AG04450 (cell line): ENCODE measurements at regions of chr10 and their contacts with region 1.

Region 1: DNA sequence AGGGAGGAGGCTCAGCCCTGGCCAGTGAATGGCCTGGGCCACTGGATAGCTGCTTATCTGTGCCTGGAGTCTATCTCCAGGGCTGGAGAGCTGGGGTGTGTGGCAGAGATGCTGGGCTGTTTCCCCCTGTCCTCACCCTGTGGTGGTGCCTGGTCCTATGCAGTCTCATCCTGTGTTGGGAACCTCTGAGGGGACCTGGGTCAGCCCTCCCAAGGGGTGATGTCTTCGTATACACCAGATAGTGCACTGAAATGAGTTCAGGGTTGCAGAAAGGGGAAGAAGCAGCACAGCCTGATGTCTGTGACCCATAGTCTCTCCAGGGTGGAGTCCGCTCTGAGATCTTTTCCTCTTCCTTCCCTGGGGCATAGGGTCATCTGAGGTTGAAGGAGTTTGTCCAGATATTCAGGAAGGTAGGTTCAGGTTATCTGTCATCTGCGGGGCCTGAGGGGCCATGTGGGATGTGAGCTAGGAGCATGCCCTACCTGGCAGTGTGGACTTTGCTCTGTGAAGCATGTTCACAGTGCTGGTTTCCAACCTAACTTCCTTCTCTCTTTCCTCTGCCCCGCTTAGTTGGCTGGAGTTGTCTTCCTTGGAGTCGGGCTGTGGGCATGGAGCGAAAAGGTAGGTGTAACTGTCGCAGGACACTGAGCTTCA is 33.4 kb upstream of the SH2D4B start:
- DNase-seq: no peak
- H3K4me3 ChIP-seq: no peak overlapping the region
- H3K27ac ChIP-seq: peak overlapping the region; percentile 42
- H3K27me3 ChIP-seq: no peaks in the 10 kb centered on the region
- CTCF ChIP-seq: no peak

Region 2: GRCh38 chr10:80382989-80383388 is 121.3 kb before region 1 on chr10:
- CTCF ChIA-PET with region 1: interaction called, 15 read pairs
- POLR2A ChIA-PET with region 1: no interaction called
- DNase-seq: no peak
- H3K4me3 ChIP-seq: no peak overlapping the region
- H3K27ac ChIP-seq: no peak overlapping the region
- H3K27me3 ChIP-seq: peaks cover 3% of the 10 kb centered on the region
- CTCF ChIP-seq: peak; percentile 60

Region 3: GRCh38 chr10:80453701-80454513 is 50.4 kb before region 1 on chr10 and contains the start of gene TSPAN14:
- CTCF ChIA-PET with region 1: interaction called, 90 read pairs
- POLR2A ChIA-PET with region 1: interaction called, 4 read pairs
- DNase-seq: peak; percentile 55
- H3K4me3 ChIP-seq: peak within 1 kb of the TSS; percentile 76
- H3K27ac ChIP-seq: peak within 1 kb of the TSS; percentile 85
- H3K27me3 ChIP-seq: no peaks in the 10 kb centered on the region
- CTCF ChIP-seq: no peak
- polyA plus RNA-seq, gene TSPAN14: 27.3 and 32.5 TPM in 2 replicates

Region 4: DNA sequence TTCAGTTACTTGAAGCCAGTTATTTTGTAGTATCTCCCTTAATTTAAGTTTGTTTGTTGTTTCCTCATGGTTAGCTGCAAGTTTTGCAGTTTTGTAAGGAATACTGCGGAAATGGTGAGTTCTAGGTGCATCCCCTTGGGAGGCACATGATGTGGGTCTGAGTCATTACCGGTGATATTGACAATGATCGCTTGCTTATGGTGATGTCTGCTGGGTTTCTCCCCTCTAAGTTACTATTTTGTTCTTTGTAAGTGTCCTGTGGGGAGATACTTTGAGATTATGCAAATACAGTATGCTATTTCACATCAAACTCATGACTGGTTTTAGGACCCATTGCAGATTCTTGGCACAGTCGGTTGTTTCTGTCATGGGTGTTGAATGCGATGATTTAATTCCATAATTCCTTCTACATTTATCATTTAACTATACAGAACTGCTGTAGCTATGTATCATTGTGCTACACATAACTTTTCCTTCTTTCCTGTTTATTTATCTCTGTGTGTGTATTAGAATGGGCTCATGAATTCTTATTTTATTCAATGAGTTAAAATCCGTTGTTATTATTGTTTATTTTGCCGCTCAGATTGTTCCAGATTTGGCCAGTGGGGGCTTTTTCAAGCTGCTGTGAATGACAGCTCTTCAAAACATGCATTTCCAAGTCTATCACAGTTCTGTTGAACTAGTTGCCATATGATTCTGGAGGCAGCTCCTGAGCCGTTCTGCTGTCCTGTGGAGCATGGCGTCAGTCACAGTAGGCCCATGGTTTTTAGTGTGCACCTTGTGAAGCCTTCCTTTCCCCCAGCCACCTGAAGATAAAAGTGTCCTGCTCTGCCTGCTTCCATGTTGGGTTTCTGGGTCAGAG is 31.8 kb before region 1 on chr10:
- CTCF ChIA-PET with region 1: interaction called, 27 read pairs
- POLR2A ChIA-PET with region 1: interaction called, 4 read pairs
- DNase-seq: peak; percentile 49
- H3K4me3 ChIP-seq: no peak overlapping the region
- H3K27ac ChIP-seq: peak overlapping the region; percentile 84
- H3K27me3 ChIP-seq: no peaks in the 10 kb centered on the region
- CTCF ChIP-seq: no peak

Region 5: GRCh38 chr10:80485950-80486764 is 18.1 kb before region 1 on chr10:
- CTCF ChIA-PET with region 1: interaction called, 19 read pairs
- POLR2A ChIA-PET with region 1: no interaction called
- DNase-seq: no peak
- H3K4me3 ChIP-seq: no peak overlapping the region
- H3K27ac ChIP-seq: no peak overlapping the region
- H3K27me3 ChIP-seq: no peaks in the 10 kb centered on the region
- CTCF ChIP-seq: no peak

Region 6: DNA sequence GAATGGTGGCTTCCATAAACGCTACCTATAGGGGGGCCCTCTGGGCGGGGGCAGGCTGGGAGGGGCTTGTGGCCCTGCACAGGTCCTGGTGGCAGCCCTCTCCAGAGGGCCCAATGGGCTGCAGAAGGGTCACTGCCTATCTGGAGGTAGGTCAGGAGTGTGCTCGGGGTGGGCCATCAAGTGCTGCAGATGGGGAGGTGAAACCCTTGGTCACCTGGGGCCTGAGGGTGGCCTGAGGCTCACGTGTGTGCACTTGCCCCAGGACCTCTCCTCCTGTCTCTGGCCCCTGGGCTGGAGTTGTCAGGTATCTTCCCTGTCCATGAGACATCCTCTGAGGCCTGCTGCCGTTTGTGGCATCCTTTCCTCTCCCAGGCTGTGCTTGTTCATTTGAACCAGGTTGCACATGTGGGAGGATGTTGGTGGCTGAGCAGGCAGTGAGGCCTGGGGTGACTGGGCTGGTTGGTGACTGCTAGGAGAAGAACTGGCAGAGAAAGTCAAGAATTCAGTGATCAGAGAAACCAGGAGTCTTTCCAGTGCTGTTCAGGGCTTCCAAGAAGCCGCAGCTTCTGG is 12.3 kb after region 1 on chr10:
- CTCF ChIA-PET with region 1: interaction called, 28 read pairs
- POLR2A ChIA-PET with region 1: no interaction called
- DNase-seq: no peak
- H3K4me3 ChIP-seq: no peak overlapping the region
- H3K27ac ChIP-seq: no peak overlapping the region
- H3K27me3 ChIP-seq: no peaks in the 10 kb centered on the region
- CTCF ChIP-seq: no peak

Region 7: GRCh38 chr10:80718024-80718423 is 213.7 kb after region 1 on chr10:
- CTCF ChIA-PET with region 1: no interaction called
- POLR2A ChIA-PET with region 1: no interaction called
- DNase-seq: no peak
- H3K4me3 ChIP-seq: no peak overlapping the region
- H3K27ac ChIP-seq: no peak overlapping the region
- H3K27me3 ChIP-seq: no peaks in the 10 kb centered on the region
- CTCF ChIP-seq: no peak